Left lung (tissue), 14 donors: ENCODE measurements at regions of chr18 and their contacts with region 1.

Region 1: GRCh38 chr18:596288-596881 is 403 bp upstream of the CLUL1 start:
- DNase-seq: peak in 3 of 4 donors; percentile 54 to 81 (median 75)
- ATAC-seq: peak; percentile 91
- H3K4me3 ChIP-seq: no peak overlapping the region
- H3K27ac ChIP-seq: no peak overlapping the region
- H3K4me1 ChIP-seq: no peaks in the 10 kb centered on the region
- H3K27me3 ChIP-seq: peaks cover 5 to 48% of the 10 kb centered on the region in 2 donors
- CTCF ChIP-seq: no peak

Region 2: GRCh38 chr18:199768-200167 is 396.6 kb before region 1 on chr18:
- intact Hi-C with region 1: no loop called
- DNase-seq: no peak
- ATAC-seq: no peak
- H3K4me3 ChIP-seq: no peak overlapping the region
- H3K27ac ChIP-seq: no peak overlapping the region
- H3K4me1 ChIP-seq: no peaks in the 10 kb centered on the region
- H3K27me3 ChIP-seq: no peaks in the 10 kb centered on the region
- CTCF ChIP-seq: no peak

Region 3: DNA sequence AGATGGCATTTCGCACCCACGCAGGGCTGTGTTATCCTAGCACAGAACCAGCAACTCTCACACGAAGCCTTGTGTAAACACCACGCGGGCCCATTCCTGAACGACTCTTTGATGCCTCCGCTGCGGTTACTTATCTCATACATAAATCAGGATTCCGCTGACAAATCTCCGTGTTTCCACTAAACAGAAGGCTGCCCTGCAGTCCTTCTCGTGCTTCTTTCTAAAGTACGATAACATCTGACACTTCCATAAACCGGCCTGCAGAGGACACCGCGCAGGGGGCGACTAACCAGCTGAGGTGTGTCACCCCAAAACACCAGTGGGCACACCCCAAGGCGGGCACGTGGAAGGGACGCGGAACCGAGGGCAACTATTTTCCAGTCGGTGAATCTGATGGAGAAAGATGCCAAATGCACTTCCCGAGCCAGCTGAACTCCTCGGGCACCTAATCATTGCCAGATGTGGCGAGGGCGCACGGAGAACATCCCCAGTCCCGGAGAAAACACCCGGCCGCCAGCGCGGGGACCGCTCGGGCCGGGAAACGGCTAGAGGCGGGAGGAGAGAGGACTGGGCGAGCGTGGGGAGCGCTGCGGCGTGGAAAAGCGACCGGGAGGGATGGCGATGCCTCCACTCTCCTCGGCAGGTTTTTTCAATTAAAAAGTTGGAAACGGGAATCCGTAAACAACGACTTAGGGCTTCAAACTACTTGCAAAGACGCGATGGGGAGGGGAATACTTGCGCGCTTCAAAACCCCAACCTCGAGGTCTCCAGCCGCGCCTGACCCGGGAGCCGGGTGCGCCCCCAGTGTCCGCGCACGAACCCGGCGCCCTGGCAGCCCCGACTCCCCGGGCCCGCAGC is 96.6 kb before region 1 on chr18:
- intact Hi-C with region 1: loop called in 1 of 2 experiments (anchors 10 kb)
- DNase-seq: peak in 2 of 4 donors; percentile 42 to 50
- ATAC-seq: peak; percentile 29
- H3K4me3 ChIP-seq: peak overlapping the region; percentile 46 to 48
- H3K27ac ChIP-seq: peak overlapping the region in 1 of 2 donors; percentile 47
- H3K4me1 ChIP-seq: peaks cover 2 to 23% of the 10 kb centered on the region in 2 donors
- H3K27me3 ChIP-seq: peaks cover 4 to 58% of the 10 kb centered on the region in 2 donors
- CTCF ChIP-seq: peak in 1 of 2 donors; percentile 19

Region 4: DNA sequence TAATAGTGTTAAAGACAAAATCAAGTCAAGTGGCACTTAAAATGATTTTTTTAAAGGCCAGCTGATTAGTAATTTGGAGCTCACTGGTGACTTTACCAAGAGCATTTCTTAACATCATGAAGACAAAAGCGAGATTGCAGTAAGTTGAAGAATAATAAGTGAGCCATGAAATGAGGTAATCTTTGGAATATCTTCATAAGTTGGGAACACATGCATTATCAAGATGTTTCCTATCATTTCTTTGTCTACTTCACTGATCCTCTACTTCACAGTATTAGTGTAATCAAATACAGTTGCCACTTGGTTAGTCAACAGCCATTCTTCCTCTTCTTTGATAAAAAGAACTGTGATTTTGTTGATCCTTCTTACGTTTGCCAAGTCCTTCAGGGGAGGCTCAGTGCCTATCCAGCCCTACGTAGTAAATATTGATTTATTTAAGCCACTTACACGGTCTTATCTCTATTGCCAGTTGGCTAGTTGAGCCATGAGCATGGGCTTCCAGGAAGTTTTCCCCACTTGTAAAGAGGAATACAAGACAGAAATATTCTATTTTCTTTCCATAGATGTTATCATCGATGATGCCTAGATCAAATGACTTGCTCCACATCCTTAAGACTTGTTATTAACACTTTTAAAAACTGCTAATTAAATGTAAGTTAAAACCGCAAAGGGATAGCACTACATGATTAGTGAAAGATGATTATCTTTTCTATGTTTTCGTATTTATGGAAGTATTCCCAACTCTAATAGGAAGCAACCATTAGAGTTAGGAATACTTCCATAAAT is 169.6 kb after region 1 on chr18:
- intact Hi-C with region 1: no loop called
- DNase-seq: no peak
- ATAC-seq: peak; percentile 36
- H3K4me3 ChIP-seq: no peak overlapping the region
- H3K27ac ChIP-seq: no peak overlapping the region
- H3K4me1 ChIP-seq: no peaks in the 10 kb centered on the region
- H3K27me3 ChIP-seq: no peaks in the 10 kb centered on the region
- CTCF ChIP-seq: no peak